WTC11 (cell line): ENCODE measurements at regions of chr12 and their contacts with region 1.

Region 1: GRCh38 chr12:51521554-51522276 is 69.3 kb upstream of the SCN8A start:
- DNase-seq: no peak
- ATAC-seq: no peak
- H3K4me3 Mint-ChIP-seq: no peak overlapping the region
- H3K27ac Mint-ChIP-seq: no peak overlapping the region
- H3K4me1 Mint-ChIP-seq: no peaks in the 10 kb centered on the region
- H3K27me3 Mint-ChIP-seq: no peaks in the 10 kb centered on the region; the same call in 1 of the 2 replicates
- CTCF ChIP-seq: no peak

Region 2: GRCh38 chr12:51424662-51425438 is 96.9 kb before region 1 on chr12 and contains the start of gene SLC4A8:
- CTCF ChIA-PET with region 1: interaction called, 33 read pairs
- POLR2A ChIA-PET with region 1: interaction called, 3 read pairs
- DNase-seq: peak; percentile 99
- ATAC-seq: peak; percentile 92
- H3K4me3 Mint-ChIP-seq: peak within 1 kb of the TSS; percentile 77
- H3K27ac Mint-ChIP-seq: no peak within 1 kb of the TSS
- H3K4me1 Mint-ChIP-seq: peaks cover 38% of the 10 kb centered on the region
- H3K27me3 Mint-ChIP-seq: no peaks in the 10 kb centered on the region
- CTCF ChIP-seq: peak; percentile 62
- total RNA-seq, gene SLC4A8: 13.1 to 23.5 TPM (median 16.9 TPM) in 3 replicates

Region 3: DNA sequence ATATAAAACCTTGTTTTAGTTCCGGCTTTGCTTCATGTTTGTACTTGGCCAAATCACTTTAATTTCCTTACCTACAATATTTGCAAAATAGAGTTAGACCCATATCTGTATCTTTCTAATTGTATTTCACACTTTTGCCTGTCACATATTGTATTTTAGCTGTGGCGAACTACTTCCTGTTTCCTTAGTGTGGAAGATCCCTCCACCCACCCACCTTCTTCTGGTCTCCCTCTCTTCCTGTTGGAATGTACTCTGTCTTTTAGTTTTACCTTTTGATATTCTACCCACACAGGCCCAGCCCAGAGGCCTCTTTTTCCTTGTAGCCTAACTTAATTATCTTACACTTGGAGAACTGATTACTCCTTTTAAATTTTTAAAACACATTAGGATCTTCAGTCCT is 147.6 kb after region 1 on chr12:
- CTCF ChIA-PET with region 1: no interaction called
- POLR2A ChIA-PET with region 1: no interaction called
- DNase-seq: no peak
- ATAC-seq: no peak
- H3K4me3 Mint-ChIP-seq: no peak overlapping the region
- H3K27ac Mint-ChIP-seq: peak overlapping the region; percentile 25
- H3K4me1 Mint-ChIP-seq: peaks cover 25% of the 10 kb centered on the region
- H3K27me3 Mint-ChIP-seq: no peaks in the 10 kb centered on the region
- CTCF ChIP-seq: no peak